AG04450 (cell line): ENCODE measurements at regions of chr12 and their contacts with region 1.

Region 1: GRCh38 chr12:27305673-27306456 is 26.8 kb upstream of the BMAL2 start:
- DNase-seq: no peak
- H3K4me3 ChIP-seq: no peak overlapping the region
- H3K27ac ChIP-seq: no peak overlapping the region
- H3K27me3 ChIP-seq: no peaks in the 10 kb centered on the region
- CTCF ChIP-seq: peak; percentile 47

Region 2: DNA sequence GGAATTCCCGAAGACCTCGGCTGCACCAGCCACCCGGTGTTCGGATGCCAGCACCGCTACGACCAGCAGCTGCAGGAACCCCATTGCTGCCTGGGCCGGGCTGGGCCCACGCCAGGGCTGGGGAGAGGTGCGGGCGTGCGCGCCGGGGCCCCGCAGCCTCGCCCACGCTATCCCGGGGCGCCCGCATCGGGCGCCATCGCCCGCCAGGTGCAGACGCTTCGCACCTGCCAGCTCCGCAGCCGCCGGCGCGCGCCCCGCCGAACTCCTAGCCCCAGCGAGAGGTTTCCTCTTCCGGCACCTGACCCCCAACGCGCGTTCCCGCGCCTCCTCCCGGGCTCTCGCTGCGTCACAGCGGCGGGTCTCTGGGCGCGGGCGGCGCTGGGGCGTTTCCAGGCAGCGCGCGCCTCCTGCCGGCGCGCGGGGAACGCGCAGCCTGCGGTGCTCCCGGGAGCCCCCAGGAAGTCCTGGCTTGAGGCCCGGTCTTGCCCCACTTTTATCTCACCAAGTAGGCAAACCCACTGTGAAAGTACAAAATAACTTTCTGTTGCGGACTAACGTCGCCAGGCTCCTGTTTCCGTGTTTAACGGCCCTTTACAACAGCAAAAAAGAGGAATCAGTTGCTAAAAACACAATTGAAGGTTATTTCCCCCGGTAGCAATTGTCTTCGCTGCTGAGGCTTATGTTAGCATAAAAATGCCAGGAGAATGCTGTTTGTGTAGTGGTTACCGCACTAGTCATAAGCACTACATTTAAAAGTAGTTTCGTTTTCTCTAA is 291.6 kb before region 1 on chr12 and contains the start of gene TM7SF3:
- CTCF ChIA-PET with region 1: interaction called, 124 read pairs
- POLR2A ChIA-PET with region 1: no interaction called
- DNase-seq: peak; percentile 48
- H3K4me3 ChIP-seq: peak within 1 kb of the TSS; percentile 85
- H3K27ac ChIP-seq: peak within 1 kb of the TSS; percentile 88
- H3K27me3 ChIP-seq: no peaks in the 10 kb centered on the region
- CTCF ChIP-seq: peak; percentile 81
- polyA plus RNA-seq, gene TM7SF3: 116 and 120 TPM in 2 replicates

Region 3: DNA sequence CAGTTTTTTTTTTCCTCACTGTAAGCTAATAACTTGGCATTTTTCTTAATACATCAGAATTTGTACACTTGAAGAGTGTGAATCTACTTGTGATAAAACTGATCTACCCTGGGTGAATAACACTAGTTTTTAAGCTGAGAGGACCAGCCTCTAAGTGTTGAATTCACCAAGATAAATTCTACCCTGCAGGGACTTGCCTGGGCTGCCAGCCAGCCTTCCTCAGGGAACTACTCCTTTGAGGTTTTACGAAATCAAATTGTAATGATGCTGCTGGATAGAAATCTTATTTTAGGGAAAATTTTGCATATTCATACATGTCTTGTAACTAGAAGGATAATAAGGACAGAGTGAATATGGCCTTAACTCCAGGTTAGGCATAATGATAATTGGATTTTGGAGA is 281.6 kb before region 1 on chr12:
- CTCF ChIA-PET with region 1: interaction called, 18 read pairs
- POLR2A ChIA-PET with region 1: no interaction called
- DNase-seq: no peak
- H3K4me3 ChIP-seq: no peak overlapping the region
- H3K27ac ChIP-seq: no peak overlapping the region
- H3K27me3 ChIP-seq: no peaks in the 10 kb centered on the region
- CTCF ChIP-seq: no peak

Region 4: DNA sequence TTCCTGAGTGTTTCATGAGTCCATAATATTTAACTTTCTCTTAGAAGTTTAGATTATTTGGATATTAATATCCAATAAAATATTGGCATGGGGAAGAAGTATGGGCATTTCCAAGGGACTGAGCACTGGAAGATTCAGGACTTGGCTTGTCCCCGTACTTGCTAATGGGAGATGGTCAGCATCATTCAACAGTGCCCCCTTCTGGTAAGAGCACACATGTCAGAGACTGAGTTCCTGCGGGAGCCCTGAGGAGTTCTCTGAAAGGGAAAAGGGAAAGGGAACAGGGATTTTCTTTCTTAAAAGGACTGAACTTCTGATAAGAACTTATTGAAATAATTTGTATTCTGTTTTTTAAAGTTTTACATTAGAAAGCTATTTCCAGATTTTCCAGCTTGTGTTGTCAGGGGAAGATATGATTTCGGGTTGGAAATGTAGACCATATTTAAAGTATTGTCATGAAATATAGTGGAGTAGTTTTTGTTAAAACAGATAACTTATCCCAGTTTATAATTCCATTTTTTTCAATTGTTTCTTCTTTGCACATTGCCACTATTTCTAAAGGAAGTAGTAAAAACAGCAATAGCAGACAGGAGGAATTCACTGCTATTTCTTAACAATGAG is 163.7 kb before region 1 on chr12:
- CTCF ChIA-PET with region 1: interaction called, 18 read pairs
- POLR2A ChIA-PET with region 1: no interaction called
- DNase-seq: peak; percentile 53
- H3K4me3 ChIP-seq: no peak overlapping the region
- H3K27ac ChIP-seq: no peak overlapping the region
- H3K27me3 ChIP-seq: no peaks in the 10 kb centered on the region
- CTCF ChIP-seq: peak; percentile 93

Region 5: GRCh38 chr12:27243804-27244683 is 61.8 kb before region 1 on chr12 and contains the start of gene STK38L:
- CTCF ChIA-PET with region 1: interaction called, 13 read pairs
- POLR2A ChIA-PET with region 1: interaction called, 3 read pairs
- DNase-seq: peak; percentile 80
- H3K4me3 ChIP-seq: peak within 1 kb of the TSS; percentile 76
- H3K27ac ChIP-seq: peak within 1 kb of the TSS; percentile 87
- H3K27me3 ChIP-seq: no peaks in the 10 kb centered on the region
- CTCF ChIP-seq: peak; percentile 39
- polyA plus RNA-seq, gene STK38L: 11.9 and 18.4 TPM in 2 replicates

Region 6: GRCh38 chr12:27319409-27319808 is 13.5 kb after region 1 on chr12:
- CTCF ChIA-PET with region 1: interaction called, 16 read pairs
- POLR2A ChIA-PET with region 1: no interaction called
- DNase-seq: no peak
- H3K4me3 ChIP-seq: no peak overlapping the region
- H3K27ac ChIP-seq: no peak overlapping the region
- H3K27me3 ChIP-seq: no peaks in the 10 kb centered on the region
- CTCF ChIP-seq: no peak

Region 7: DNA sequence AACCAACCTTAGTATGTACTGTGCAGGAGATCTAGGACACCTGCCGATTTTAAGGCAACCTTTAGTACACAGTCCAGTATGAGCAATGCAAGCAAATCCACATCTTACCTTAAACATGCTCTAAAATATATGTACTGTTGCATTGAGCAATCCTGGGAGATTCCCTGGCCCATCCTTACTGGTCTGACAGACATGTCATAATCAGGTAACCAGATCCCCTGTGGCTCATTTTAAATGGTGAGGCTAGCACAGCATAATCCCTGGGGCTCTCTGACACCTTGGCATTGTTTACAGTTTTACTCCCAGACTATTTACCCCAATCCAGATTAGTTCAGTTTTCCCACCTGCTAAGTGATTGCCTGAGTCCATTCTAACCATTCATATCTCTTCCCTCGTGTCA is 41.9 kb after region 1 on chr12:
- CTCF ChIA-PET with region 1: no interaction called
- POLR2A ChIA-PET with region 1: no interaction called
- DNase-seq: no peak
- H3K4me3 ChIP-seq: no peak overlapping the region
- H3K27ac ChIP-seq: no peak overlapping the region
- H3K27me3 ChIP-seq: no peaks in the 10 kb centered on the region
- CTCF ChIP-seq: no peak

Region 8: GRCh38 chr12:27595231-27595642 is 289.4 kb after region 1 on chr12:
- CTCF ChIA-PET with region 1: no interaction called
- POLR2A ChIA-PET with region 1: no interaction called
- DNase-seq: peak; percentile 61
- H3K4me3 ChIP-seq: no peak overlapping the region
- H3K27ac ChIP-seq: peak overlapping the region; percentile 24
- H3K27me3 ChIP-seq: no peaks in the 10 kb centered on the region
- CTCF ChIP-seq: no peak

Region 9: DNA sequence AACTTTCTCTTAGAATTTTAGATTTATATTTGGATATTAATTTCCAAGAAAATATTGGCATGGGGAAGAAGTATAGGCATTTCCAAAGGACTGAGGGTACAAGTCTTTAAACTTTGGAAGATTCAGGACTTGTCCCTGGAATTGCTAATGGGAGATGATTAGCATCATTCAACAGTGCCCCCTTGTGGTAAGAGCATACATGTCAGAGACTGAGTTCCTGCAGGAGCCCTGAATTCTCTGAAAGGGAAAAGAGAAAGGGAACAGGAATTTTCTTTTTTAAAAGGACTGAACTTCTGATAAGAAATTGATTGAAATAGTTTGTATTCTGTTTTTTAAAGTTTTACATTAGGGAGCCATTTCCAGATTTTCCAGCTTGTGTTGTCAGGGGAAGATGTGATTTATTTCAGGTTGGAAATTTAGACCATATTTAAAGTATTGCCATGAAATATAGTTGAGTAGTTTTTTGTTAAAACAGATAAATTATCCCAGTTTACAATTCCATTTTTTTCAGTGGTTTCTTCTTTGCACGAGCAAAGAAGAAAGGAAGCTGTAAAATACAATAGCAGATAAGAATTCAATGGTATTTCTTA is 346.4 kb after region 1 on chr12:
- CTCF ChIA-PET with region 1: interaction called, 12 read pairs
- POLR2A ChIA-PET with region 1: no interaction called
- DNase-seq: peak; percentile 63
- H3K4me3 ChIP-seq: no peak overlapping the region
- H3K27ac ChIP-seq: no peak overlapping the region
- H3K27me3 ChIP-seq: no peaks in the 10 kb centered on the region
- CTCF ChIP-seq: peak; percentile 91

Region 10: GRCh38 chr12:27710592-27711316 is 404.9 kb after region 1 on chr12 and contains the start of gene MRPS35:
- CTCF ChIA-PET with region 1: no interaction called
- POLR2A ChIA-PET with region 1: no interaction called
- DNase-seq: peak; percentile 79
- H3K4me3 ChIP-seq: peak within 1 kb of the TSS; percentile 99
- H3K27ac ChIP-seq: peak within 1 kb of the TSS; percentile 84
- H3K27me3 ChIP-seq: no peaks in the 10 kb centered on the region
- CTCF ChIP-seq: no peak
- polyA plus RNA-seq, gene MRPS35: 59.4 and 66.6 TPM in 2 replicates